Activated T-helper 1 cell treated with anti-CD3 and anti-CD28 coated beads, Interleukin-12 subunit alpha, Interleukin-12 subunit beta, Interleukin-2, Interleukin-4 antibody, amounts not matched to agents 30 ng/mL and 10 ng/mL and 1 ng/mL, durations not matched to agents 14 hours and 24 hours and 36 hours (primary cell): ENCODE measurements at regions of chr14 and their contacts with region 1.

Region 1: DNA sequence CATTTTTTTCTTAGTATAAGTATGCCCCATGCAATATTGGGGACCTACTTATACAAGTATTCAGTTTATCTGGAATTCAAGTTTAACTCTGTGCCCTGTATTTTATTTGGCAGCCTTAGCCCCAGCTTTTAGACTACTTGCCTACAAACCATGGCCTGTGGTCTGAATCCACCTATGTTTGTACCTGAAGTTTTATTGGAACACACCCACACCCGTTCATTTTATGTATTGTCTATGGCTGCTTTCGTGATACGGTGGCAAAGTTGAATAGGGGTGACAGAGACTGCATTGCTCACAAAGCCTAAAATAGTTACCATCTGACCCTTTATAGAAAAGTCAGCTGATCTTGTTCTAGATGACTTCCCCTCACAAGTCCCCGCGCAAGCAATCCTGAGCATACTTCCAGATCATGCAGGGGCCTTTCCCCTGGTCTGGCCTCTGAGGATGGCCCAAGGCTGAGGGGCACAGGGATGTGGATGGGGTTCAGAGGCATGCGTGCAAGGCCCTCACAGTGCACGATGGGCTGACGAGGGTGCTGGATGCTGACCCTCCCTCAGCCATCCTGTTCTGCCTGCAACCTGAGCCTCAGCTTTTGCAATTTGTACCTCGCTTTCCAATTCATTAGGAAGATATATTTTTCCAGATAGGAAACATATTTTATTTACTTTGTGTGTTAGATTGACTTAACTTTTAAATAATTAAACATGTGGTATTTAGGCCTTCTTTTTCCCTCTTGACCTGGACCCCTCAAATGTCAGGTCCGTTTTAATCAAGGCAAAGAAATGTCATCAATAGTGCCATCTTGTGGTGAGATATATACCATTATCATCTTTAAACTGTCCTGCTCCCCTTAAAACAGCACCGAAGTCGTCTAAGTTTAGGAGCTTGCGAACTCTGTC is 527.3 kb upstream of the CCDC196 start:
- DNase-seq: no peak
- H3K4me3 Mint-ChIP-seq: no peak overlapping the region
- H3K27ac Mint-ChIP-seq: no peak overlapping the region
- H3K4me1 Mint-ChIP-seq: peaks cover 23% of the 10 kb centered on the region
- H3K27me3 Mint-ChIP-seq: peaks cover 6% of the 10 kb centered on the region

Region 2: DNA sequence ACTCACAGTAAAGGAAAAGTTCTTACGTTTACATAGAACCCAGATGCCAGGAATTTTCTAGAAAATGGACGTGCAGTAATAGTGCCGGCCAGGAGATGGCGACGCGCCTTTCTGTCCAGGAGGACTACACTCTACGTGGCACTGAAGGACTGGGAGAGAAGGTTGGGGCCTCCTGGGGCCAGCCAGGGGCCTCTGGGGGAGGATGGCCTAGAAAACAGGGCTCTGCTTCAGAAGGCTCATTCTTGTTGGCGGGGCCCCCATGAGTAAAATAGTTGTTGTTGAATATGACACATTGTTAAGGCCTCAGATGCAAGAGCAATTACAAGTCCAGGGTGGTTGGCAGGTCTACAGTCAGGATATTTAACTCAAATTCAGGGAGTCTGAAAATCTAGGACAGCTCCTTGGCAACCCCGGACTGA is 736.5 kb before region 1 on chr14:
- intact Hi-C with region 1: loop called (anchors 5 kb)
- DNase-seq: peak; percentile 34
- H3K4me3 Mint-ChIP-seq: no peak overlapping the region
- H3K27ac Mint-ChIP-seq: peak overlapping the region; percentile 41
- H3K4me1 Mint-ChIP-seq: peaks cover 48% of the 10 kb centered on the region
- H3K27me3 Mint-ChIP-seq: no peaks in the 10 kb centered on the region

Region 3: GRCh38 chr14:65531148-65531547 is 427.8 kb before region 1 on chr14:
- intact Hi-C with region 1: no loop called
- DNase-seq: no peak
- H3K4me3 Mint-ChIP-seq: no peak overlapping the region
- H3K27ac Mint-ChIP-seq: no peak overlapping the region
- H3K4me1 Mint-ChIP-seq: peaks cover 27% of the 10 kb centered on the region
- H3K27me3 Mint-ChIP-seq: no peaks in the 10 kb centered on the region

Region 4: DNA sequence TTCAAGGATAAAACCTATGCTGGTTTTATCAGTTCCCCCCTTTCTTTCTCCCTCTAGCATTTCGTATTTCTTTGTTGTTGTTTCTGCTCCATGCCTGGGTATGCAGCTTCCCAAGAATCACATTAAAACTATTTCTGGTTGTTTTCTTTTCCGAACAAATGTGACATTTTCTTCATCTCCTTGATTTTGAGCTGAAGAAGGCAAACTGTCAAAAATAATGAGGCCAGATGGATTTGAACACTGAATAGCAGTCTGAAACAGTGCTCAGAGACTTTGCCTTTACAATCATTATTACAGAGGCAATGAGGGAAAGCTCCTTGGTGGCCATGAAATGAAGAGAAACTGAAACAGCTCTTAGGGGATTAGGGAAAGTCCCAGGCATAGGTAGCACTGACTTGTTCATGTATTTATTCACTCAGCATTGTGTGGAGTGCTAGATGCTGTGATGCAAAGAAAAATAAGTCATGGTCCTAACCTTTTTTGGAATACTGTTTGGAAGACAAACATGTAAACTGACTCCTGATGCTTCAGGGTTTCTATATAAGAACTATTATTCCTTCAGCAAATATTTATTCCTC is 226.9 kb before region 1 on chr14:
- intact Hi-C with region 1: loop called (anchors 2 kb)
- DNase-seq: peak; percentile 20
- H3K4me3 Mint-ChIP-seq: peak overlapping the region; percentile 47
- H3K27ac Mint-ChIP-seq: peak overlapping the region; percentile 64
- H3K4me1 Mint-ChIP-seq: peaks cover 16% of the 10 kb centered on the region
- H3K27me3 Mint-ChIP-seq: no peaks in the 10 kb centered on the region

Region 5: GRCh38 chr14:65824285-65824977 is 134.5 kb before region 1 on chr14:
- intact Hi-C with region 1: loop called (anchors 1 kb)
- DNase-seq: peak; percentile 53
- H3K4me3 Mint-ChIP-seq: no peak overlapping the region
- H3K27ac Mint-ChIP-seq: no peak overlapping the region
- H3K4me1 Mint-ChIP-seq: peaks cover 28% of the 10 kb centered on the region
- H3K27me3 Mint-ChIP-seq: peaks cover 9% of the 10 kb centered on the region

Region 6: DNA sequence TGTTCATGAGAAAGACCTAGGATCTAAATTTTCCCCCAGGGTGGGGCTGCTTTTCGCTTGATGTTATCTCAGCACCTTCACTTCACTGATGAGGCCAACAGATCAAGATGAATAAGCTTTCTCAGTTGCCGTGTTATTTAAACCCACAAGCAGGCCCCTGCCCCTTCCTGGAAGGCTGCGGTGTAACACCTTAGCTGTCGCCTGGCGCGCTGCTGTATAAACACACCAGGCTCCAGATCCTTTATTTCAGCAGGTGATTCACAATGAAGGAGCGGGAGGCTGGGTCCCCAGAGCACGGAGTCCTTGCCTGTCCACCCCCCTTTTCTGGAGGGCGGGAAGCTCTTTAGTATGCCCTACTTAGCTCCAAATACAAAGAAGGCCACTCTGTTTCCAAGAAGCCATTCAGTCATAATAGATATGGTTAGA is 31.0 kb before region 1 on chr14:
- intact Hi-C with region 1: loop called (anchors 5 kb)
- DNase-seq: peak; percentile 82
- H3K4me3 Mint-ChIP-seq: peak overlapping the region; percentile 50
- H3K27ac Mint-ChIP-seq: peak overlapping the region; percentile 86
- H3K4me1 Mint-ChIP-seq: peaks cover 60% of the 10 kb centered on the region
- H3K27me3 Mint-ChIP-seq: peaks cover 4% of the 10 kb centered on the region

Region 7: DNA sequence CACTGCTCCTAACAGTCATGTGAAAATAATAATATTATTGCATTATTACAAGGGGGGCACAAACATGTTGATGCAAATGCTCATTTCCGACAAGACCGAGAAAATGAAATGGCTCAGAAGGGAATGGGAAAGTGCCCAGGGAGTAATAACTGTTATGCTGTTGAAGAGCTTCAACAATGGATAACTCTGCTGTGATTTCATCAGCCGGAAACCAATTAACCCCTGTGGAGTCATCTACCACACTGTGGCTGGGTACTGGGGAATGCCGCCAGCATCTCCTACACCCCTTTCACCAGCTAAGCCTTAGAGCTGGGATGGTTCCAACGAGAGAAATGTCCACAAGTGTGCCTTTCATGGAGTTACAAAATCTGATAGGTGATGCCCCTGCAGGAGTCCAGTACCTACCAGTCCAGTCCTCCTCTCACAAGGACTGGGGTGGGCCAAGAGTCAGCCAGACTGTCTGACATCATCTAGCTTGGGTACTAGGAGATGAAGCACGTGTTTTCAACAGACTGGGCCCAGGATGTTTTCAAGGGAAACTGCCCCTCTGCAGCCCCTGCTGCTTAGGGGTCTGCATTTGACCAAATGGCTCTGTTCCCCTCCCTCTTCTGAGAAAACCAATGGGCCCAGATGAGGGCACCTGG is 18.0 kb after region 1 on chr14:
- intact Hi-C with region 1: no loop called
- DNase-seq: no peak
- H3K4me3 Mint-ChIP-seq: no peak overlapping the region
- H3K27ac Mint-ChIP-seq: no peak overlapping the region
- H3K4me1 Mint-ChIP-seq: no peaks in the 10 kb centered on the region
- H3K27me3 Mint-ChIP-seq: peaks cover 16% of the 10 kb centered on the region

Region 8: GRCh38 chr14:66070509-66071319 is 111.8 kb after region 1 on chr14:
- intact Hi-C with region 1: loop called (anchors 1 kb)
- DNase-seq: peak; percentile 48
- H3K4me3 Mint-ChIP-seq: no peak overlapping the region
- H3K27ac Mint-ChIP-seq: no peak overlapping the region
- H3K4me1 Mint-ChIP-seq: peaks cover 13% of the 10 kb centered on the region
- H3K27me3 Mint-ChIP-seq: peaks cover 16% of the 10 kb centered on the region